Activated CD8-positive, alpha-beta T cell treated with anti-CD3 and anti-CD28 coated beads, Interleukin-2, amount 10 ng/mL, durations not matched to agents 7 days and 5 days (primary cell): ENCODE measurements at regions of chr9 and their contacts with region 1.

Region 1: DNA sequence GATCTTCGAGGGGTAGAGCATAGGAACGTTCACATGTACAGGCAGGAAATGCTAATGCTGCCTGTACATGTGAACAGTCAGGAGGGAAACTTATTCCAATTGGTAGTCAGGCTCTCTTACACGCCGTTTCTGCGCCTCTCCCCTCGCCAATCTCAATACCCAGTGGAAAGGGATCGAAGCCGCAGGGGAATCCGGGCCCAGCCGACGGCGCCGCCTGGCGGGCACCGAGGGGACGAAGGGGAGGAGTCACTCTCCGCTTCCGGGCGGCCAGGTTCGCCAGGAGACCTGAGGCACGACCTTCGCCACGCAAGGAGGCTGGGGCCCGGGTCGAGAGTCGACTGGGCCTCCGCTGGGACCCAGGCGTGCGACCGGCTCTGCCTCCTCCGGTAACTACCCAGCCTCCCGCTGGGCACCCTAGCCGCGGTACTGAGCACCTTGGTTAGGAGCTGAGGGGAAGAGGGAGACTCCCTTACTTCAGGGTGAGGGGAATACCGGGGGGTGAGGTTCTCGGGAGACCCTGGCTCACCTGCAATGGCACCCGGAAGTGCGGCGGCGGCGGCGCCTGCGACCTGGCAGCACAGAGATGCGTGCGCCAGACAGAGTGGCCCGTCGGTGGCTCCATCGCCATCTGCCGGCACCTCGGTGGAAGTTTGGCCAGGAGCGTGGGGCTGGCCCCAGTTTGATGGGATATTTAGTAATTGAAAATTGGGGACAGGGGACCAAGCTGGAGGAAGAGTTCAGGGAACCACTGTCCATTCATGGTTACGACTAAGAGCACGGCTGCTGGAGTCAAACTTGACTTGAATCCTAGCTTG is at the start of gene PIGO:
- DNase-seq: peak; percentile 91
- ATAC-seq: peak; percentile 92
- H3K4me3 Mint-ChIP-seq: peak within 1 kb of the TSS; percentile 85
- H3K27ac Mint-ChIP-seq: peak within 1 kb of the TSS; percentile 92
- H3K4me1 Mint-ChIP-seq: peaks cover 44% of the 10 kb centered on the region
- H3K27me3 Mint-ChIP-seq: no peaks in the 10 kb centered on the region
- total RNA-seq, gene PIGO: 22.6 to 23.0 TPM

Region 2: GRCh38 chr9:35079426-35080341 is 16.6 kb before region 1 on chr9 and contains the start of gene FANCG:
- CTCF ChIA-PET with region 1: interaction called, 111 read pairs
- POLR2A ChIA-PET with region 1: interaction called, 94 read pairs
- DNase-seq: peak; percentile 90
- ATAC-seq: peak; percentile 91
- H3K4me3 Mint-ChIP-seq: peak within 1 kb of the TSS; percentile 95
- H3K27ac Mint-ChIP-seq: peak within 1 kb of the TSS; percentile 99
- H3K4me1 Mint-ChIP-seq: peaks cover 28% of the 10 kb centered on the region
- H3K27me3 Mint-ChIP-seq: no peaks in the 10 kb centered on the region
- total RNA-seq, gene FANCG: 125 to 136 TPM

Region 3: DNA sequence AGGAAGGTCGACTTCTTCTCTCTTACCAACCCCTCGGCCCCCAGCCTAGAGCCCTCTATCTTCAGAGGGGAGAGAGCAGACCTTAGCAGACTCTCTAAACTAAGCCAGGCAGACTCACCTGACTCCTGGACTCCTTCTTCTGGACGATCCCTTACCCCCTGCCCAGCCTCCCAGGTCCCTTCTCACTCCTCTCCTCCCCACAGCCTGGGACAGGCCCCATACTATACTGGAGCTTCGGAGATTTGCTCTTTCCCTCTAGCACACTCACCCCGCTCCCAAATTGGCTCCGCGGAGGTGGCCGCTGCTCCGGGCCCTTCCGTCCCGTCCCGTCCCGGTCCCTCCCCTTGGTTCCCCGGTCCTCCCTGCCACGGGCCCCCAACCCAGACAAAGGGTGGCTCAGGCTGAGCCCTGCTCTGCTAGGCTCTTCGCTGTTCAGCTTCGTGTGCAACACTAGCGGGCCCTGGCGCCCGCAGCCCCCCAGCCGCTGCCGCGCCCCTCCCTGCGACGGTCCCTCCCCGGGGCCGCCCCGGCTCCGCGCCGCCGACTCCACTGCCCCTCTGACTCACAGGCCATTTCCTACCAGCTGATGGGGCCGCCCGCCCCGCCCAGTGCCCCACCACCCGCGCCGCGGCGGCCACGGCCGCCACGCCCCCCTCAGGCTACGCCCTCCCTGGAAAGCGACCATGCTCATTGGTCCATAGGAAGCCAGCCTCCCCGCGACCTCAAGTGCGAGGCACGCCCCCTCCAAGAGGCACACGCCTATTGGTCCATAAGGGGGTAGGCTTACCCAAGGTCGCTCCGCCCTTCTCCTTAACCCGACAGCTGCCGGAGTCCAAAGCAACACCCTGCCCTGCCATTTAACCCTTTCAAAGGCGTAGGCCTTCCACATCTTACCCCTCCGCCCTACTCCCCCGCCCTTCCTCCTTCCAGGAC is 15.0 kb after region 1 on chr9:
- CTCF ChIA-PET with region 1: interaction called, 14 read pairs
- POLR2A ChIA-PET with region 1: interaction called, 6 read pairs
- DNase-seq: peak; percentile 98
- ATAC-seq: peak; percentile 67
- H3K4me3 Mint-ChIP-seq: peak overlapping the region; percentile 69
- H3K27ac Mint-ChIP-seq: peak overlapping the region; percentile 61
- H3K4me1 Mint-ChIP-seq: peaks cover 52% of the 10 kb centered on the region
- H3K27me3 Mint-ChIP-seq: no peaks in the 10 kb centered on the region

Region 4: DNA sequence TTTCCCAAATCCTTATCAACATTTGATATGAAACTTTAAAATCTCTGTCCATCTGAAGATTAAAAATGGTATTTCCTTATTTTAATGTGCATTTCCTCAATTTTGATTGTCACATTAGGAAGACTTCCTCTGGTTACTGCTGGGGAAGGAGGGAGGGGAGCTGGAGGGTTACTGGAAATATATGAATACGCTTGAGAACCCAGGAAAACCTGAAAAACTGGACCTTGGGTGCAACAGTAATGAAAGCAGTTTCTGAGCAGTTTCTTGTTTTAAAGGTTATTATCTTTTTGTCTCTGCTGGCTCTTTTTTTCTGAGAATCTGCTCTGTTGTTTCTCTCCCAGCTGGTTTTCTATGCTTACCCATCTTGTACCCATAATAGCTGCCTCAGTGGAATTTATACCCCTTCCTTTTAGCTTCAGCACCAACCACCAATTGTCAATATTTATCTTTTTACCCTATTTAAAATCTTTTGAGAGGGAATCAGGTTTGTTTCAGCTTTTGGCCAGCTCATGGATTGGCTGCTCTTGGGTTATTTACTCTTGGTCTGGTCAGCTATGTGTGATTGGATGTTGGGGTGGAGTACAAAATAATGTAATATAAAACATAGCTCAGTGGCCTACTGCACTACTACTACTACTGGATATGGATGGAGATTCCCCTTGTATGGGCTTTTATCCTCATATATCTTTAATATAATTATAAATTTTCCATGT is 133.0 kb after region 1 on chr9:
- CTCF ChIA-PET with region 1: no interaction called
- POLR2A ChIA-PET with region 1: no interaction called
- DNase-seq: no peak
- ATAC-seq: no peak
- H3K4me3 Mint-ChIP-seq: no peak overlapping the region
- H3K27ac Mint-ChIP-seq: no peak overlapping the region
- H3K4me1 Mint-ChIP-seq: no peaks in the 10 kb centered on the region
- H3K27me3 Mint-ChIP-seq: peaks cover 4% of the 10 kb centered on the region